MCF 10A (cell line): ENCODE measurements at regions of chr4 and their contacts with region 1.

Region 1: GRCh38 chr4:41143311-41144039 is 70.9 kb downstream of the APBB2 start:
- DNase-seq: peak; percentile 90
- H3K4me3 Mint-ChIP-seq: peak overlapping the region; percentile 56
- H3K27ac Mint-ChIP-seq: peak overlapping the region; percentile 93
- H3K4me1 Mint-ChIP-seq: peaks cover 56% of the 10 kb centered on the region
- H3K27me3 Mint-ChIP-seq: no peaks in the 10 kb centered on the region
- CTCF ChIP-seq: no peak

Region 2: GRCh38 chr4:40924096-40924792 is 219.2 kb before region 1 on chr4:
- CTCF ChIA-PET with region 1: no interaction called
- POLR2A ChIA-PET with region 1: no interaction called
- intact Hi-C with region 1: loop called (anchors 10 kb)
- DNase-seq: peak; percentile 69
- H3K4me3 Mint-ChIP-seq: no peak overlapping the region
- H3K27ac Mint-ChIP-seq: no peak overlapping the region
- H3K4me1 Mint-ChIP-seq: peaks cover 25% of the 10 kb centered on the region
- H3K27me3 Mint-ChIP-seq: no peaks in the 10 kb centered on the region
- CTCF ChIP-seq: peak; percentile 77

Region 3: GRCh38 chr4:40992472-40993295 is 150.8 kb before region 1 on chr4:
- CTCF ChIA-PET with region 1: no interaction called
- POLR2A ChIA-PET with region 1: interaction called, 8 read pairs
- intact Hi-C with region 1: loop called (anchors 5 kb)
- DNase-seq: peak; percentile 75
- H3K4me3 Mint-ChIP-seq: peak overlapping the region; percentile 43
- H3K27ac Mint-ChIP-seq: peak overlapping the region; percentile 80
- H3K4me1 Mint-ChIP-seq: peaks cover 63% of the 10 kb centered on the region
- H3K27me3 Mint-ChIP-seq: no peaks in the 10 kb centered on the region
- CTCF ChIP-seq: no peak

Region 4: DNA sequence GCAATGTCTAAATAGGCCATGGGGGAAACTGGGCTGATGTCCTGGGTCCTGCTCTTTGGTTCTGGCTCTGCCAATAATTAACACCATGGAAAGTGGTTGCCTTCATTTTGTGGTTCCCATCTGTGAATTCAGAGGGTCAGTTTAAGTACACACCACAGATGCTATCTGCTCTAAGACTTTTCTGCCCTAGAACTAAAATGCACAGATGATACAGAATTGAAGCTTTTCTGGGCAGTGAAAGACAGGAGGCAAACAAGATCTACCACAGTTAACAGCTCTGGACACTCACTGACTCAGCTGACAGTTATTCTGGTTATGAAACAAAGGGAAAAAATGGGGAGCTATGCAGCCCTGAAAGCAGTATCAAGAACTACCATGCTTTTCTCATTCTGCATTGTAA is 33.5 kb after region 1 on chr4:
- CTCF ChIA-PET with region 1: interaction called, 3 read pairs
- POLR2A ChIA-PET with region 1: interaction called, 23 read pairs
- intact Hi-C with region 1: loop called (anchors 1 kb)
- DNase-seq: peak; percentile 69
- H3K4me3 Mint-ChIP-seq: no peak overlapping the region
- H3K27ac Mint-ChIP-seq: peak overlapping the region; percentile 95
- H3K4me1 Mint-ChIP-seq: peaks cover 51% of the 10 kb centered on the region
- H3K27me3 Mint-ChIP-seq: no peaks in the 10 kb centered on the region
- CTCF ChIP-seq: peak; percentile 19